Right ventricle myocardium superior (tissue), 1 donor: ENCODE measurements at regions of chr6 and their contacts with region 1.

Region 1: GRCh38 chr6:13711733-13712598 is at the start of gene RANBP9:
- DNase-seq: peak; percentile 91
- ATAC-seq: peak; percentile 94
- total RNA-seq, gene RANBP9: 29.9 TPM

Region 2: DNA sequence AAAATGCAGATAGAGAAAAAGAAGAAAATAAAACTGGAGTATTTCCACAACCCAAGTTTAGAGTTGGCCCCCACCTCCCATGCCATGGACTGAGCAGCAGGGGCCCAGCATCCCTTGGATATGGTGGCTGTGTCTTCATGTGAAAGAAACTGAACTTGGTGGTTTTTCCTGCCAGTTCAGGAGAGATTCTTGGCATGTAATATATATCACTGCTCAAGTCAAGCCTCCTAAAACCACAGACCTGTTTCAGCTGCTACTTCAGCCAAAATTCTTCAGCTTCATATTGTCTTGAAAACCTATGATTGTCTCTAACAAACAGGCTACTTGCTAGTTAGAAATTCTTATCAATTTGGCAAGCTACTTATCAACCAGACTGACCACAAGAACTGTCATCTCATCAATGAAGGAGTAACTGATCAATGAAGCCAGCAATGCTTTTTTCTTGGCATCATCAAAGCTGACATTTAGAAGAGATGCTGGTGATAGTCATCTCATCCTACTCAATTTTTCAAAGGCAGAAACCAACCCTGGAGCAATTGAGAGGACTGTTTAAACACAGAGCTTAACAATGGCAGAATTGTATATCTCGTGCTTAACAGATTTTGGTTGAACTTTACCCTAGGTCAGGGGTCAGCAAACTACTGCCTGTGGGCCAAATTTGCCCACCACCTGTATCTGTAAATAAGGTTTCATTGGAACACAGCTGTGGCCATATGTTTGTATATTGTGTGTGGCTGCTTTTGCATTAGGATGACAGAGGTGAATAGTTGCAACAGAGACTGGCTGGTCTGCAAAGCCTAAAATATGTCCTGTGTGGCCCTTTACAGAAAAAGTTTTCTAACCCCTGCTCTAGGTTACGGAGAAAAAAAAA is 107.2 kb before region 1 on chr6:
- intact Hi-C with region 1: no loop called
- DNase-seq: no peak
- ATAC-seq: no peak

Region 3: GRCh38 chr6:13614926-13615798 is 96.8 kb before region 1 on chr6 and contains the start of gene NOL7:
- intact Hi-C with region 1: loop called (anchors 5 kb)
- DNase-seq: peak; percentile 97
- ATAC-seq: peak; percentile 97
- total RNA-seq, gene NOL7: 47.9 TPM

Region 4: GRCh38 chr6:13787137-13787536 is 75.2 kb after region 1 on chr6:
- intact Hi-C with region 1: no loop called
- DNase-seq: no peak
- ATAC-seq: peak; percentile 39